ENCODE measurements at regions of chr7 and their contacts with region 1.

Region 1: DNA sequence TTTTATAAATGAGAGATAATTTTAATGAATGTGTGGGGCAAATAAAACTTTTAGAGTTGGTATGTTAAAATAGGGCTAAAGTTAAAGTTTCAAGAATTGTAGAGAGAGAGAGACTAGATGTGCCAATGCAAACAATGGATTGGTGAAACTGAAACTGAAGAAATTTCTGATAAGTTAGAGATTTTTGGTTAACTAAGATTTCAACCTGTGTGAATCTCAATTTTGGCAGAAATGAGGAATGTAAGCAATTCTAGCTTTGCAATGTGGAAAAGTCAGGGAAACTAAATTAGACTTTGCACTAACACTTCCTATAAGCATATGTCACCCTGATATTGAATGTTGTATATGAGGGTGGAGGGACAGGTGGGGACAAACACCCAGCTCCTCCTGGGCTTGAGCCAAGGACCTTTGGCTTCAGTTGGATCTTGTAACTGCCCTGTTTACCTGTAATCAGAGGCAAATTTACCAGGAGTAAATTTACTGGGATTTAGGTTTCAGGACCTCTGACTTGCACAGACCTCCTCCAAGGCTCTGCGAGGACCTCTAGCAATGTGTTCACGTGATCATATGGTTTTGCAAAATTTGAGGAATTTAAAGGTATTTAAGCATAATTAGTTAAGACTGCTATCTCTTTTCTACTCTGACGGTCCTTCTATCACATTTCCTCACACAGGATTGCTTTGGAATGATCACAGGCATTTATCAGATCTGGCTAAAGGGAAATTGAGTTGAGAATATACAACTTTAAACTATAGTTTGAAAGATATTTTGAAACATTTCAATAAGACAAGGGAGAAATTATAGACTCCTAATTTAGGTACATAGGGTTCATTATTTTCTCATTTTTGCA is 33.1 kb upstream of the RPA3 start:
- DNase-seq: no peak
- H3K4me3 ChIP-seq: no peak overlapping the region
- H3K27ac ChIP-seq: no peak overlapping the region
- H3K4me1 ChIP-seq: no peaks in the 10 kb centered on the region
- H3K27me3 ChIP-seq: no peaks in the 10 kb centered on the region
- CTCF ChIP-seq: no peak
- POLR2A ChIP-seq: no peak

Region 2: GRCh38 chr7:7617550-7617949 is 133.9 kb before region 1 on chr7:
- intact Hi-C with region 1: no loop called
- DNase-seq: no peak
- H3K4me3 ChIP-seq: no peak overlapping the region
- H3K27ac ChIP-seq: no peak overlapping the region
- H3K4me1 ChIP-seq: no peaks in the 10 kb centered on the region
- H3K27me3 ChIP-seq: no peaks in the 10 kb centered on the region
- CTCF ChIP-seq: no peak
- POLR2A ChIP-seq: no peak

Region 3: DNA sequence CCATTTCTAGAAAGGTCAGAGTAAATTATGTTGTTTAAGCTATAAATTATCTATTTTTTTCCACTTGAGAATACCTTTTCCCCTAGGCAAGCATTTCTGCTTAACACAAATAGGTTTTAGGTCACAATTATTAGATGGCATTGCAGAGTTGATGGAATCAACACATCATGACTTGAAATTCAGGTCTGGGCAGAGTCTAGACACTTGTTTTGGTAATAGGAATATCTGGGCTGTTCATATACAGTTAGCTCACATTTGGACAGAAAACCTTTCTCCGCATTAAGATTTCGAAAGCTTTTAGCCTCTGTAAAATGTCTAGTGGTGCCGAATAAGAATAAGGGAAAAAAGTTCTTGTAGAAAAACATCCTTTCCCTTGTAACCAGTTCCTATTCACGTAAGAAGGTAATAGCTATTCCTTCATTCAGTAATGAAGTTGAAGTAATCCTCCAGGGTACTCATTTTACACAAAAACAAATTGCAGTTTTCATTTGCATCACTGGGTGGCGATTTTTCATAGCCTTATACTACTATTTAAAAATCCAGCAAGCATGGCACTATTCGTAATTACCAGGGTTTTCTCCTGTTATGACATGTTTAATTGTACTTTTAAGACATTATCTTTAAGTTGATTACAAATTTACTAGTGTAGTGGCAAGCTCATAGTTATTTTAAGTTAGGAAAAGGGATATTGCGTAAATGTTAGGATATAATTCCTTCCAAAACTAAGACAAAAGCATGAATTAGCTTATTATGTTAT is 70.1 kb before region 1 on chr7:
- intact Hi-C with region 1: loop called (anchors 10 kb)
- DNase-seq: no peak
- H3K4me3 ChIP-seq: peak overlapping the region in 3 of 4 donors; percentile 18 to 45 (median 19)
- H3K27ac ChIP-seq: peak overlapping the region in 3 of 4 donors; percentile 54 to 67 (median 59)
- H3K4me1 ChIP-seq: peaks cover 0 to 28% (median 15%) of the 10 kb centered on the region in 3 donors
- H3K27me3 ChIP-seq: no peaks in the 10 kb centered on the region
- CTCF ChIP-seq: peak; percentile 52 to 76 (median 61)
- POLR2A ChIP-seq: no peak